Activated B cell treated with CpG ODN at 0.5 μM for 24 hours (primary cell): ENCODE measurements at regions of chr16 and their contacts with region 1.

Region 1: GRCh38 chr16:20849587-20850390 is 43.5 kb downstream of the REXO5 start:
- DNase-seq: peak; percentile 50
- ATAC-seq: peak; percentile 74
- H3K4me3 Mint-ChIP-seq: no peak overlapping the region
- H3K27ac Mint-ChIP-seq: no peak overlapping the region
- H3K4me1 Mint-ChIP-seq: peaks cover 5% of the 10 kb centered on the region
- H3K27me3 Mint-ChIP-seq: no peaks in the 10 kb centered on the region
- CTCF ChIP-seq: peak; percentile 95

Region 2: GRCh38 chr16:20874088-20874581 is 24.3 kb after region 1 on chr16:
- CTCF ChIA-PET with region 1: interaction called, 10 read pairs
- POLR2A ChIA-PET with region 1: no interaction called
- intact Hi-C with region 1: no loop called
- DNase-seq: no peak
- ATAC-seq: no peak
- H3K4me3 Mint-ChIP-seq: peak overlapping the region; percentile 61
- H3K27ac Mint-ChIP-seq: peak overlapping the region; percentile 85
- H3K4me1 Mint-ChIP-seq: peaks cover 43% of the 10 kb centered on the region
- H3K27me3 Mint-ChIP-seq: no peaks in the 10 kb centered on the region
- CTCF ChIP-seq: no peak

Region 3: GRCh38 chr16:20928774-20929411 is 79.1 kb after region 1 on chr16:
- CTCF ChIA-PET with region 1: no interaction called
- POLR2A ChIA-PET with region 1: no interaction called
- intact Hi-C with region 1: no loop called
- DNase-seq: no peak
- ATAC-seq: no peak
- H3K4me3 Mint-ChIP-seq: no peak overlapping the region
- H3K27ac Mint-ChIP-seq: no peak overlapping the region
- H3K4me1 Mint-ChIP-seq: no peaks in the 10 kb centered on the region
- H3K27me3 Mint-ChIP-seq: no peaks in the 10 kb centered on the region
- CTCF ChIP-seq: no peak

Region 4: GRCh38 chr16:20944861-20945574 is 95.2 kb after region 1 on chr16:
- CTCF ChIA-PET with region 1: interaction called, 5 read pairs
- POLR2A ChIA-PET with region 1: interaction called, 9 read pairs
- intact Hi-C with region 1: loop called (anchors 1 kb)
- DNase-seq: no peak
- ATAC-seq: no peak
- H3K4me3 Mint-ChIP-seq: no peak overlapping the region
- H3K27ac Mint-ChIP-seq: no peak overlapping the region
- H3K4me1 Mint-ChIP-seq: peaks cover 2% of the 10 kb centered on the region
- H3K27me3 Mint-ChIP-seq: no peaks in the 10 kb centered on the region
- CTCF ChIP-seq: no peak

Region 5: GRCh38 chr16:21083729-21084268 is 234.0 kb after region 1 on chr16:
- CTCF ChIA-PET with region 1: interaction called, 34 read pairs
- POLR2A ChIA-PET with region 1: no interaction called
- intact Hi-C with region 1: loop called (anchors 1 kb)
- DNase-seq: peak; percentile 18
- ATAC-seq: peak; percentile 47
- H3K4me3 Mint-ChIP-seq: no peak overlapping the region
- H3K27ac Mint-ChIP-seq: no peak overlapping the region
- H3K4me1 Mint-ChIP-seq: no peaks in the 10 kb centered on the region
- H3K27me3 Mint-ChIP-seq: peaks cover 4% of the 10 kb centered on the region
- CTCF ChIP-seq: no peak

Region 6: DNA sequence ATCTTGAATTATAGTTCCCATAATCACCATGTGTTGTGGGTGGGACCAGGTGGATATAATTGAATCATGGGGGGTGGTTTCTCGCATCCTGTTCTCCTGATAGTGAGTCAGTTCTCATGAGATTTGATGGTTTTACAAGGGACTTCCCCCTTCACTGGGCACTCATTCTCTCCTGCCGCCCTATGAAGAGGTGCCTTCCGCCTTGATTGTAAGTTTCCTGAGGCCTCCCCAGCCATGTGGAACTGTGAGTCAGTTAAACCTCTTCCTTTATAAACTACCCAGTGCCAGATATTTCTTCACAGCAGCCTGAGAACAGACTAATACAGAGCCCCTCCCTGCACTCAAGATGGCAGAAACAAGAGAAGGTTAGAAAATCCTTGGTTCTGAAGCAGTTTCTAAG is 335.0 kb after region 1 on chr16:
- CTCF ChIA-PET with region 1: no interaction called
- POLR2A ChIA-PET with region 1: no interaction called
- intact Hi-C with region 1: loop called (anchors 1 kb)
- DNase-seq: no peak
- ATAC-seq: peak; percentile 65
- H3K4me3 Mint-ChIP-seq: no peak overlapping the region
- H3K27ac Mint-ChIP-seq: peak overlapping the region; percentile 85
- H3K4me1 Mint-ChIP-seq: peaks cover 21% of the 10 kb centered on the region
- H3K27me3 Mint-ChIP-seq: peaks cover 2% of the 10 kb centered on the region
- CTCF ChIP-seq: no peak

Region 7: DNA sequence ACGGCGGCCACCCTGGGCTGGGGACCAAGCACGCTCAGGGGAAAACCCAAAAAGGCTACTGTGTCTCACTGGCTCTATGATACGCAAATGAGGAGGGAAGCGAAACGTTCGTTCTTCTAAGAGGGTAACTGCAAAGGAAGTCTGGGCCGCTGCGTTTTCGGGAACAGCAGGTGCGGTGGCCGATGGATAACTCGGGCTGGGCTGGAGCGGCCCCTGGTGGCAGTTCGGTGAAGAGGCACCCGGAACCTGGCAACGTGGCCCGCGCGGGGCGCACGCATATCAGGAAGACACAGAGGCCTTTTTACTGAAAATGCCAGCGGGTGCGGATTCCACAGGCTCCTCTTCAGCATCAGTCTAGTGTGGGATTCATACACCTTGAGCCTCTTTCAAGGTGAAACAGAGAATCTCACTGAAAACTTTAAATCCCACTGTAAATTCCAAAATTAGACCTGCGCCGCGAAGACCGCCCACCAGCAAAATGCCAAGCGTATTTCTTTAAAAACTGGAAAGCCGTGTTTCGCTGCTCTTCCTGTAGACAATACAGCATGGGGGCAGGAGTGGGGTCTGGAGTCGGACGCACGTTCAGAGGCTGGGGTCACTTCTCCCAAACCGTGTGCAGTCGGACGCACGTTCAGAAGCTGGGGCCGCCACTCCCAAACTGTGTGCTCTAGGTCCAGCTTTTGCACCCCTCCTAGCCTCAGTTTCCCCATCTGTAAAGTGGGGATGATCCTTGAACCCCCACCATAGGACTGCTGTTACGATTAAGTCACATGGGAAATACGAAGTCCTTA is 705.2 kb after region 1 on chr16:
- CTCF ChIA-PET with region 1: interaction called, 3 read pairs
- POLR2A ChIA-PET with region 1: no interaction called
- intact Hi-C with region 1: loop called (anchors 1 kb)
- DNase-seq: peak; percentile 98
- ATAC-seq: peak; percentile 94
- H3K4me3 Mint-ChIP-seq: peak overlapping the region; percentile 83
- H3K27ac Mint-ChIP-seq: peak overlapping the region; percentile 94
- H3K4me1 Mint-ChIP-seq: peaks cover 35% of the 10 kb centered on the region
- H3K27me3 Mint-ChIP-seq: no peaks in the 10 kb centered on the region
- CTCF ChIP-seq: peak; percentile 91